ENCODE measurements at regions of chr1 and their contacts with region 1.

Region 1: DNA sequence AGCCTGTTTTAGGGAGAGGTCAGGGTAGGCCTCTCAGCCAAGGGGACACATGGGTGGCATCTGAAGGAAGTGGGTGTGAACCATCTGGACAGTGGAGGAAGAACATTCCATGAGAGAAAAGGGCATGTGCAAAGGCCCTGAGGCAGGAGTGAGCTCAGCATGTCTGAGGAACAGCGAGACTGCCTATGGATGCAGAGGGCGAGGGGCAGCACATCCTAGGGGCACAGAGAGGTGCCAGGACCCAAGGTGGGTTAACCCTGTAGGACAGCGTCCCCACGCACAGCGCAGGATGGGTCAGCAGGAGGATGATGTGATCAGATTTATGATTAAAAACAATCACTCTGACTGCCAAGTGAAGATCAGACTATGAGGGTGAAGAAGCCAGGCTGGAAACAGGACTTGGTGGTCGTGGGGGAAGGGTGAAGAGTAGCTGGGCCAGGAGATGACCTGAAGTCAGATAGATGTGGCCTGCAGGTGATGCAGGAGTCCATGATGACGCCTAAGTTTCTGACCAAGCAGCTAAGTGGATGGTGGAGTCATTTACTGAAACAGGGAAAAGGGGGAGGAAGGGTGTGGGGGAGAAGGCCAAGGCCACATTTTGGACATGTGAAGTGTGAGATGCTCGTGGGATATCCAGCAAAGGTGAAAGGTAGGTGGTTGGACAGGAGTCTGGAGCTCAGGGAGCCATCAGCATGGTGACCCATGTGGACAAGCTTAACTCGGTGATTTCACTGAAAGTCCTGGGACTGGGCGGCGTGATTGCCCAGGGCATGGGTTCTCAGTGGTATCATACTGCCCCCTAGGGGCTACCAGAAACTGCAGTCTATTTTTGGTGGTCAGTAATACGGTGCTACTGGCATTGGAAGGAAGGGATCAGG is 37.8 kb downstream of the PABPC4 start:
- DNase-seq: peak; percentile 75
- H3K4me3 ChIP-seq: no peak overlapping the region
- H3K27ac ChIP-seq: no peak overlapping the region
- H3K4me1 ChIP-seq: no peaks in the 10 kb centered on the region
- H3K27me3 ChIP-seq: no peaks in the 10 kb centered on the region
- CTCF ChIP-seq: peak; percentile 85 to 87
- POLR2A ChIP-seq: no peak

Region 2: GRCh38 chr1:39091845-39092645 is 446.8 kb before region 1 on chr1:
- CTCF ChIA-PET with region 1: interaction called, 18 read pairs
- POLR2A ChIA-PET with region 1: no interaction called
- dilution Hi-C with region 1: no loop called
- intact Hi-C with region 1: no loop called
- DNase-seq: peak; percentile 76
- H3K4me3 ChIP-seq: no peak overlapping the region
- H3K27ac ChIP-seq: no peak overlapping the region
- H3K4me1 ChIP-seq: no peaks in the 10 kb centered on the region
- H3K27me3 ChIP-seq: no peaks in the 10 kb centered on the region
- CTCF ChIP-seq: peak; percentile 64
- POLR2A ChIP-seq: no peak

Region 3: DNA sequence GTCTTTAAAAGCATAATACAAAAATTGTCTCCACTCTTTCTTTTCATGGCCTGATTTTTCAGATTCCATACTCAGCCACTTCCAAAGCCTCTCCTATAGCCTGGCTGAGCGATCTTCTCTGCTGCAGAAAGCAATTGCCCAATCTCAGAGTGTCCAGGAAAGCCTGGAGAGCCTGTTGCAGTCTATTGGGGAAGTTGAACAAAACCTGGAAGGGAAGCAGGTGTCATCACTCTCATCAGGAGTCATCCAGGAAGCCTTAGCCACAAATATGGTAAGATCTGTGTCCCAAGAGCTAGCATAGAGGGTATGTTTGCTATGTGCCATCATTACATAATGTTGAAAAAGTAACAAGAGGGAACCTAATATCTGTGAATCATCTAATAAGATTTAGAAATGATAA is 178.1 kb before region 1 on chr1:
- CTCF ChIA-PET with region 1: interaction called, 4 read pairs
- POLR2A ChIA-PET with region 1: no interaction called
- dilution Hi-C with region 1: no loop called
- intact Hi-C with region 1: loop called (anchors 5 kb)
- DNase-seq: no peak
- H3K4me3 ChIP-seq: no peak overlapping the region
- H3K27ac ChIP-seq: no peak overlapping the region
- H3K4me1 ChIP-seq: peaks cover 3% of the 10 kb centered on the region
- H3K27me3 ChIP-seq: no peaks in the 10 kb centered on the region
- CTCF ChIP-seq: no peak
- POLR2A ChIP-seq: no peak

Region 4: GRCh38 chr1:39478126-39478915 is 60.5 kb before region 1 on chr1:
- CTCF ChIA-PET with region 1: interaction called, 11 read pairs
- POLR2A ChIA-PET with region 1: no interaction called
- dilution Hi-C with region 1: no loop called
- intact Hi-C with region 1: no loop called
- DNase-seq: peak; percentile 42
- H3K4me3 ChIP-seq: no peak overlapping the region
- H3K27ac ChIP-seq: no peak overlapping the region
- H3K4me1 ChIP-seq: peaks cover 4% of the 10 kb centered on the region
- H3K27me3 ChIP-seq: no peaks in the 10 kb centered on the region
- CTCF ChIP-seq: no peak
- POLR2A ChIP-seq: no peak

Region 5: DNA sequence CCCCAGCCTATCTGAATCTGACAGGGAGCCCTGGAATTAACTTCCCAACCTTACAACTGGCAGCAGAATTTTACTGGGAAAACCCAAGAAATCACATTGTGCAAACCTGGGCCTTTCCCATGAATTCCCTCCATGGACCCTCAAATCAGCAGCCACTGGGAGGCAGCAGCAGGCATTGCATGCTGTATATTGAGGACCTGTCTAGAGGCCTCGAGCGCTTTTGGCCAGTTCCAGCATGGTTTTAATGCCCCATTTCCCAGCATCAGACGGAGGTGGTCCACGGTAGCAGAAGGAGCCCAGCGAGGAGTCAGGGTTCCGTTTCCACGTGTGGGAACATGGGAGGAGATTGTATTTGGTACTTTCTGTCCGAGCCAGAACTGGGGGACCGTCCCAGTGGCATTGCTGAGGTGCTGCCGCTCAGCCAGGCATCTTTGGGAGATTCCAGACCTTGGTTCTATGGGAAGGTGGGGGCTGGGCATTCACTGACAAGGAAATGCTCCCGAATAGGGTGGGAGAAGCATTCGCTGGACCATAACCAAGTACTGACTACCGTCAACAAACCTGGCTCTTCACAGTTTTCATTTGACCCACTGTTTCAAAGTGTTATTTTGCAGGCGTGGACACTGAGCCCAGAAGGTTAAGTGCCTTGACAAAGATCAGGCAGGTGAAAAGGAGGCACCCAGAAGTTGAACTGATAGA is 31.4 kb before region 1 on chr1:
- CTCF ChIA-PET with region 1: interaction called, 7 read pairs
- POLR2A ChIA-PET with region 1: no interaction called
- dilution Hi-C with region 1: no loop called
- intact Hi-C with region 1: loop called (anchors 2 kb)
- DNase-seq: no peak
- H3K4me3 ChIP-seq: no peak overlapping the region
- H3K27ac ChIP-seq: no peak overlapping the region
- H3K4me1 ChIP-seq: no peaks in the 10 kb centered on the region
- H3K27me3 ChIP-seq: no peaks in the 10 kb centered on the region
- CTCF ChIP-seq: peak; percentile 22 to 43
- POLR2A ChIP-seq: no peak

Region 6: GRCh38 chr1:39575191-39576015 is 36.6 kb after region 1 on chr1:
- CTCF ChIA-PET with region 1: interaction called, 12 read pairs
- POLR2A ChIA-PET with region 1: no interaction called
- dilution Hi-C with region 1: no loop called
- intact Hi-C with region 1: no loop called
- DNase-seq: peak; percentile 49
- H3K4me3 ChIP-seq: peak overlapping the region; percentile 5 to 94 (median 80)
- H3K27ac ChIP-seq: peak overlapping the region; percentile 67
- H3K4me1 ChIP-seq: peaks cover 27% of the 10 kb centered on the region
- H3K27me3 ChIP-seq: no peaks in the 10 kb centered on the region
- CTCF ChIP-seq: no peak
- POLR2A ChIP-seq: no peak

Region 7: GRCh38 chr1:39623053-39623452 is 84.2 kb after region 1 on chr1:
- CTCF ChIA-PET with region 1: no interaction called
- POLR2A ChIA-PET with region 1: no interaction called
- dilution Hi-C with region 1: no loop called
- intact Hi-C with region 1: no loop called
- DNase-seq: no peak
- H3K4me3 ChIP-seq: no peak overlapping the region
- H3K27ac ChIP-seq: no peak overlapping the region
- H3K4me1 ChIP-seq: no peaks in the 10 kb centered on the region
- H3K27me3 ChIP-seq: peaks cover 0 to 10% of the 10 kb centered on the region in 2 experiments
- CTCF ChIP-seq: no peak
- POLR2A ChIP-seq: no peak

Region 8: GRCh38 chr1:39845275-39846116 is 306.7 kb after region 1 on chr1:
- CTCF ChIA-PET with region 1: no interaction called
- POLR2A ChIA-PET with region 1: no interaction called
- dilution Hi-C with region 1: no loop called
- intact Hi-C with region 1: no loop called
- DNase-seq: peak; percentile 96
- H3K4me3 ChIP-seq: no peak overlapping the region
- H3K27ac ChIP-seq: no peak overlapping the region
- H3K4me1 ChIP-seq: peaks cover 8% of the 10 kb centered on the region
- H3K27me3 ChIP-seq: no peaks in the 10 kb centered on the region
- CTCF ChIP-seq: no peak
- POLR2A ChIP-seq: no peak